Sigmoid colon (tissue), 7 donors: ENCODE measurements at regions of chr13 and their contacts with region 1.

Region 1: GRCh38 chr13:49936085-49936940 is at the start of gene SPRYD7:
- DNase-seq: peak; percentile 98
- H3K4me3 ChIP-seq: peak within 1 kb of the TSS; percentile 79 to 94 (median 88)
- H3K27ac ChIP-seq: peak within 1 kb of the TSS; percentile 85 to 92 (median 89)
- H3K4me1 ChIP-seq: peaks cover 0 to 30% (median 23%) of the 10 kb centered on the region in 4 donors
- H3K27me3 ChIP-seq: no peaks in the 10 kb centered on the region
- CTCF ChIP-seq: peak; percentile 93 to 97 (median 96)
- EP300 ChIP-seq: no peak
- POLR2A ChIP-seq: peak; percentile 29 to 45
- total RNA-seq, gene SPRYD7: 6.6 to 9.1 (median 8.4) TPM

Region 2: DNA sequence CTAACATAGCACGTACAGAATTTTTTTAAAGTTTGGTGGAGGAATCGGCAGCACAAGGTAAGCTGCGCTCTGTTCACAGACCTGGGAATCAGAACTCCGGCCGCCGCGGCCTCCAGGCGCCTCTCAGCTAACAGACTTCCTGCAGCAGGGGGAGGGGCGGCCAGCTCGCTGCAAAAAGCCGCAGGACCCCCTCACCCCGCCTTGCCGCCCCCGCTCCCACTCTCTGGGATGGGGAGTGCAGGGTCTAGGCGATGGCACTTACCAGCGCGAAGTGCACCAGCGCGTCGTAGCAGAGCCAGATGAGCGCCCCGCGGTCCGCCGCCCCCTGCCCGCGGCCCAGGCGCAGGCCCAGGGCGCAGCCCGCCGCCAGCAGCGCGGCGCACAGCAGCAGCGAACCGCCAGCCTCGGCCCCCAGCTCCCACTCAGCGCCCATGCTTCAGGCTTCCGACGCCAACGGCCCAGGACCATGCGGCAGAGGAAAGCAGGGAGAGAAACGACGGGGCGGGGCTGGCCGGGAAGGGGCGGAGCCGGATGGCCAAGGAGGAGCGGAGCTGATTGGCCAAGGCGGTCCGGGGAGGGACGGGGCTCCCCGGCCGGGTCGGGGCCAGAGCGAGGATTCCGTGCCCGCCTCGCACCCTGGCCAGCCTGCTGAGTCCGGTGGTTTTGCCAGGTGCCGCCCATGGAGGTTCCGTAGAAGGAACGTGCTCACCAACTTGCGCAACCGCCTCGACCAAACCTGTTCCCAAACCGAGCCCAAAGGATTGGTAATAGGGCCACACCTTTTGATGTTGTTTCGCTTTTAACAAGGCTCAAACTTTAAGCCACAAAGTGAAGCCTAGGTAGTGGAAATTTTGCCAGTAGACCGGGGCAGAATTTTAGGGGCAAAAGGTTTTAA is 245.1 kb before region 1 on chr13 and contains the start of gene EBPL:
- intact Hi-C with region 1: loop called (anchors 2 kb)
- DNase-seq: peak; percentile 96
- H3K4me3 ChIP-seq: peak within 1 kb of the TSS; percentile 53 to 94 (median 69)
- H3K27ac ChIP-seq: peak within 1 kb of the TSS; percentile 72 to 88 (median 84)
- H3K4me1 ChIP-seq: peaks cover 0 to 26% (median 13%) of the 10 kb centered on the region in 4 donors
- H3K27me3 ChIP-seq: no peaks in the 10 kb centered on the region
- CTCF ChIP-seq: no peak
- EP300 ChIP-seq: no peak
- POLR2A ChIP-seq: peak; percentile 19 to 52
- total RNA-seq, gene EBPL: 31.0 to 75.9 (median 69.0) TPM

Region 3: DNA sequence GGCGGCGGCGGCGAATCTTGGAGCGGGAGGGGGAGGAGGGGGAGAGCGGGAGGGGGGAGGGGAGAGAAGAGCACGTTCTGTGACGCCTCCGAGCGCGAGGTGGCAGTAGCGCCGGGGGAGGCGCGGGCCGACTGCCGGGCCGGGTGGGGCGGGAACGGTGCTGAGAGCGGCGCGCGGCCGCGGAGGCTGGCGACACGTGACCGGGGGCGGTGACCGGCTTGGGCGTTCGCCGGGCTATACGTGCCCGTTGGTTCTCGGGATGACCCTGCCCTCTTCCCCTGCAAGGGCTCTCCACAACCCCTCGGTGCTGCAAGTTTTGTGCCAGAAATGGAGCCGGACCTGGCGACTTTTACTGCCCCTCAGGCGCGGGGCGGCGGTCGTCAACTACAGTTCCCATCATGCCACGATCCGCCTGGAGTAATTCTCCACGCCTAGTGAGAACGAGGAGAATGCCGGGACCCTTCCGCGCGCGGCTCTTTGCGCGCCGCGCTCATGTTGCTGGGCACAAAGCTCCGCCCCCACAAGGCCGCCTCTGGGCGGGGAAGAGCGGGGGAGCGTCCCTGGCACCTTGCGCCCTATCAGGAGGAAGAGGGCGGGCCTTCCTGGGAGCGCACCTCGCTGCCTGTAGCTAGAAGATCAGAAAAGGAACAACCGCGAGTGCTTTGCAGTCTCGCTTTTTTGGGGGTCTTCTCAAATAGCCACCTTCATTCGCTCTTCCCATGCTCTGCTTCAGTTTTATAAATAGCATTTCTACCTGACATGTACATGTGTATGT is 143.6 kb before region 1 on chr13 and contains the start of gene KPNA3:
- intact Hi-C with region 1: loop called (anchors 5 kb)
- DNase-seq: peak; percentile 98
- H3K4me3 ChIP-seq: peak within 1 kb of the TSS; percentile 63 to 100 (median 94)
- H3K27ac ChIP-seq: peak within 1 kb of the TSS; percentile 92 to 99 (median 97)
- H3K4me1 ChIP-seq: peaks cover 0 to 36% (median 31%) of the 10 kb centered on the region in 4 donors
- H3K27me3 ChIP-seq: no peaks in the 10 kb centered on the region
- CTCF ChIP-seq: no peak
- EP300 ChIP-seq: no peak
- POLR2A ChIP-seq: no peak
- total RNA-seq, gene KPNA3: 41.5 to 64.3 (median 46.3) TPM

Region 4: DNA sequence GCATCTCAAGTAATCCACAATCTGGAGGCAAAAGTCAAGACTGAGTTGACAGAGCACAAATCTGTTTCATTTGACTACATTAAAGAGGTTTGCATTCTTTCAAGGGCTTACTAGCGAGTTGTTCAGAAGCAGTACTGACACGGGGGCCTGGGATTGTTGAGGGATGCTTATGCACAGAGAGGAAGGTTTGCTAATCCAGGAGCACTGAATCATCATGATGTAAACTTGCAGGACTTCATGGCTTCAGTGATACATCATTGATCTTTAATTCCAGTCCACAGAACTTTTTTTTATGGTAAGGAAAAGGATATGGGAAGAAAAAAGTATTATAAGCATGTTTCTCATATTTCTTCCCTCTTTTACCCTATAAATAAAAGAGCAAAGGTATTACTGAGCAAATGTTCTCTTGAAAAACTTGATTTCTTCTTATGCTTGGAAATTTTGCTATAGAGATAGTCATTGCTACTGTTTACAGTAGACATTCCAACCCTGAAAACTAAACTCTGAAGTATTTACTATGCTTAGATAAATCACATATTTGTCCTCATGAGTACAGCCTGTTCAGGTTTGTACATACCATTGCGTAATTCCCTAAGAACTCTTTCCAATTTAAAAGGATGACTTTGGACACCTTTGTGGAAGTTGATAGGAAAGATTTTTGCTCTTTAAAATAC is 78.0 kb before region 1 on chr13:
- intact Hi-C with region 1: loop called (anchors 5 kb)
- DNase-seq: no peak
- H3K4me3 ChIP-seq: no peak overlapping the region
- H3K27ac ChIP-seq: peak overlapping the region; percentile 48 to 84 (median 71)
- H3K4me1 ChIP-seq: peaks cover 0 to 28% (median 25%) of the 10 kb centered on the region in 4 donors
- H3K27me3 ChIP-seq: no peaks in the 10 kb centered on the region
- CTCF ChIP-seq: no peak
- EP300 ChIP-seq: peak in 2 of 4 donors; percentile 59 to 79
- POLR2A ChIP-seq: no peak

Region 5: GRCh38 chr13:49996951-49997895 is 60.9 kb after region 1 on chr13 and contains the start of gene TRIM13:
- intact Hi-C with region 1: loop called (anchors 1 kb)
- DNase-seq: peak; percentile 95
- H3K4me3 ChIP-seq: peak within 1 kb of the TSS; percentile 78 to 89 (median 86)
- H3K27ac ChIP-seq: peak within 1 kb of the TSS; percentile 99 to 100 (median 99)
- H3K4me1 ChIP-seq: peaks cover 0 to 51% (median 46%) of the 10 kb centered on the region in 4 donors
- H3K27me3 ChIP-seq: no peaks in the 10 kb centered on the region
- CTCF ChIP-seq: peak; percentile 34 to 76 (median 64)
- EP300 ChIP-seq: no peak
- POLR2A ChIP-seq: peak; percentile 47 to 58
- total RNA-seq, gene TRIM13: 17.1 to 25.0 (median 22.9) TPM

Region 6: GRCh38 chr13:50081679-50082425 is 145.5 kb after region 1 on chr13:
- intact Hi-C with region 1: loop called (anchors 5 kb)
- DNase-seq: peak; percentile 99
- H3K4me3 ChIP-seq: peak overlapping the region; percentile 75 to 88 (median 79)
- H3K27ac ChIP-seq: peak overlapping the region; percentile 89 to 96 (median 91)
- H3K4me1 ChIP-seq: peaks cover 0 to 59% (median 27%) of the 10 kb centered on the region in 4 donors
- H3K27me3 ChIP-seq: peaks cover 0 to 9% (median 0%) of the 10 kb centered on the region in 3 donors
- CTCF ChIP-seq: no peak
- EP300 ChIP-seq: peak in 2 of 4 donors; percentile 4 to 7
- POLR2A ChIP-seq: peak; percentile 7 to 8

Region 7: GRCh38 chr13:50580684-50581305 is 644.5 kb after region 1 on chr13:
- intact Hi-C with region 1: no loop called
- DNase-seq: no peak
- H3K4me3 ChIP-seq: no peak overlapping the region
- H3K27ac ChIP-seq: no peak overlapping the region
- H3K4me1 ChIP-seq: no peaks in the 10 kb centered on the region
- H3K27me3 ChIP-seq: no peaks in the 10 kb centered on the region
- CTCF ChIP-seq: no peak
- EP300 ChIP-seq: no peak
- POLR2A ChIP-seq: no peak